Right cardiac atrium (tissue), 5 donors: ENCODE measurements at regions of chr13 and their contacts with region 1.

Region 1: DNA sequence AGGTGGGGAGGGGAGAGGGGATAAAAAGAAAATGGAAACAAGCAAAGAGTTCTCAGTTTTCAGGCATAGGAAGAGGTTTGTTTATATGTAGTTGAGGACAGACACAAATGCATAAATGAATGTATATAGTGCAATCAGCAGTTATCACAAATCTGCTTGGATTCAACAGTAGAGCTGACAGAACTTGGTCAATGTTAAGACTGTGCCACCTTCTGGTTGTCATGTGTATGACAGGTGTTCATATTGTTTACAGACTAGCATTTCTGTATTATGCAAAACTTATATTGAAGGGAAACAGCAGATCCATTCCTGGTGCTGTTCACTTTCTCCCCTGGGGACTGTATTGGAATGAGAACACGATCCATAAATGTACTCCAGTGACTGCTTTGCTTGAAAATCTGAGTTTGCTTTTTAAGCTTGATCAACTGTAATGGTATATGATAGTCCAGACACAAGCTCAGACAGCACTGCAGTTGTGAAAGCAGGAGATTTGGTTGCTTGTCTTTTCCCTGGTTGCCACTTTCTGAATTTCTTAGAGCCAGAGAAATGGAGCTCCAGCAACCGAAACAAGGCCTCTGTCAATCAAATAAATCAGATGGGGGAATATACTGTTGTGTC is 319.5 kb upstream of the OBI1 start:
- DNase-seq: no peak
- ATAC-seq: peak in 1 of 2 donors; percentile 59
- H3K4me3 ChIP-seq: no peak overlapping the region
- H3K27ac ChIP-seq: no peak overlapping the region
- H3K4me1 ChIP-seq: no peaks in the 10 kb centered on the region
- H3K27me3 ChIP-seq: no peaks in the 10 kb centered on the region

Region 2: GRCh38 chr13:78137404-78138142 is 840.9 kb before region 1 on chr13:
- intact Hi-C with region 1: loop called in 3 of 4 experiments (anchors 2 kb)
- DNase-seq: no peak
- ATAC-seq: peak; percentile 81 to 85
- H3K4me3 ChIP-seq: no peak overlapping the region
- H3K27ac ChIP-seq: no peak overlapping the region
- H3K4me1 ChIP-seq: no peaks in the 10 kb centered on the region
- H3K27me3 ChIP-seq: no peaks in the 10 kb centered on the region

Region 3: DNA sequence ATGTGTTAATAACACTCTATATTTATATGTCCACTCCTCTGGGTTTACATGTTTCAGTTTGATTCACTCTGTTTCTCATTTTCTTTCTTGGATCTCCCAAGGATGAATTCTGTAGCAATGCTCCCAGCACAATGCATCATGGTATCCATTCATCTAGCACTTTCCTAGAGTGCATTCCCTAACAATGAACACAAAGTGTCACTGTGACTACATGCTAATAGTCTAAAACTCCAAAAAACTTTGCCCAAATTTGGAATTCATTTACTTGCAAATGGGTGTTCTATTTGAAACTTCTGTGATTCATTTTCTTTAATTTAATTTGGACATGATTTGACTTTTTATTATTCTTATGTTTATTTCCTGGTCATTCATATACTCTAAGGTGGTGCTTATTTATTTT is 661.5 kb before region 1 on chr13:
- intact Hi-C with region 1: loop called in 2 of 4 experiments (anchors 5 to 10 kb)
- DNase-seq: no peak
- ATAC-seq: peak in 1 of 2 donors; percentile 61
- H3K4me3 ChIP-seq: no peak overlapping the region
- H3K27ac ChIP-seq: no peak overlapping the region
- H3K4me1 ChIP-seq: no peaks in the 10 kb centered on the region
- H3K27me3 ChIP-seq: no peaks in the 10 kb centered on the region

Region 4: GRCh38 chr13:79097201-79097600 is 118.7 kb after region 1 on chr13:
- intact Hi-C with region 1: no loop called
- DNase-seq: no peak
- ATAC-seq: no peak
- H3K4me3 ChIP-seq: no peak overlapping the region
- H3K27ac ChIP-seq: no peak overlapping the region
- H3K4me1 ChIP-seq: no peaks in the 10 kb centered on the region
- H3K27me3 ChIP-seq: no peaks in the 10 kb centered on the region